Breast epithelium (tissue), 4 donors: ENCODE measurements at regions of chr4 and their contacts with region 1.

Region 1: DNA sequence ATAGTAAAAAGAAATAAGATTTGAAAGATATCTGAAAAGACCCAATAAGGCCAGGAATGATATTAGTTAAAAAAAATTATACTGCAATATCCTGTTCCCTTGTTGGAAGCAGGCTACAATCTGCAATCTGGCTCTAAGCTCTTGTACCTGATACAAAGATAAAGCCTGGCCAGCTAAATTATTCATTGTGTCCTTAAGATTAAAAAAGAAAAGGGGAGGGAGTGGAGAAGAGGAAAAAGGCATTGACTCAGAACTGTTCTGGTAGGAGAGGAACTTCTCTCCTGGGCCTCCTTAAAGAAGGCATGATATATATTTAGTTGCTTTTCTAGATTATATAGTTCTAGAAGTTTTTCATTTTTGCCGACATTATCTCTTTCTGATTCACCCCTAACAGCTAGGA is 46.7 kb downstream of the IRF2 start:
- DNase-seq: no peak
- H3K4me3 ChIP-seq: no peak overlapping the region
- H3K27ac ChIP-seq: peak overlapping the region in 1 of 2 donors; percentile 58
- H3K4me1 ChIP-seq: peaks cover 0 to 2% of the 10 kb centered on the region in 2 donors
- H3K27me3 ChIP-seq: no peaks in the 10 kb centered on the region
- CTCF ChIP-seq: no peak
- POLR2A ChIP-seq: no peak

Region 2: GRCh38 chr4:184448821-184449220 is 21.1 kb after region 1 on chr4:
- intact Hi-C with region 1: loop called (anchors 2 kb)
- DNase-seq: peak in 1 of 2 donors; percentile 35
- H3K4me3 ChIP-seq: peak overlapping the region; percentile 34 to 62 (median 45)
- H3K27ac ChIP-seq: peak overlapping the region; percentile 81
- H3K4me1 ChIP-seq: peaks cover 6 to 31% of the 10 kb centered on the region in 2 donors
- H3K27me3 ChIP-seq: no peaks in the 10 kb centered on the region
- CTCF ChIP-seq: no peak
- POLR2A ChIP-seq: no peak

Region 3: GRCh38 chr4:185471235-185472102 is 1043.8 kb after region 1 on chr4 and contains the start of gene CCDC110:
- intact Hi-C with region 1: no loop called
- DNase-seq: peak; percentile 81 to 98
- H3K4me3 ChIP-seq: peak within 1 kb of the TSS; percentile 83 to 96 (median 92)
- H3K27ac ChIP-seq: peak within 1 kb of the TSS; percentile 85 to 86
- H3K4me1 ChIP-seq: no peaks in the 10 kb centered on the region
- H3K27me3 ChIP-seq: no peaks in the 10 kb centered on the region
- CTCF ChIP-seq: peak in 2 of 3 donors; percentile 35 to 71
- POLR2A ChIP-seq: no peak
- total RNA-seq, gene CCDC110: 1.3 to 4.1 (median 1.3) TPM